Heart right ventricle (tissue), 16 donors: ENCODE measurements at regions of chr15 and their contacts with region 1.

Region 1: DNA sequence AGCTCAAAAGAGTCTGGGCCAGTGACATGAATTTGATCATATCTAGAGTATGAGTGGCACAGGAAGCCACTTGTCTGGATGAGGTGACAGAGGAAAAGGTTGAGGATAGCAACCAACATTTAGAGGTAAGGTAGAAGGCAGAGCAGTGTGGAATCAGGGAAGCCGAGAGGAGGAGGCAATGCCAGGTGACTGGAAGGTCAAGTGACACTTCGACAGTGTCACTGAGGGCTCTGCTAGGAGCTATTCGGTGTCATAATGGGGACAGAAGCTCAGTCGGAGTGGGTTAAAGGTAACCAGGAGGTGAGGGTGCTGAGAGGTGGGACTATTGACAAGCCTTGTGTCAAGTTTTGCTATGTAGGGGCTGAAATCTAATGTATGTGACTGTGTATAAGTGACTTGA is 56.7 kb downstream of the IGF1R start:
- DNase-seq: no peak
- ATAC-seq: peak in 4 of 8 donors; percentile 19 to 36 (median 26)
- H3K4me3 ChIP-seq: no peak overlapping the region
- H3K27ac ChIP-seq: peak overlapping the region in 4 of 10 donors; percentile 19 to 56 (median 34)
- H3K4me1 ChIP-seq: peaks cover 9 to 87% (median 53%) of the 10 kb centered on the region in 9 donors
- H3K27me3 ChIP-seq: no peaks in the 10 kb centered on the region
- CTCF ChIP-seq: no peak

Region 2: DNA sequence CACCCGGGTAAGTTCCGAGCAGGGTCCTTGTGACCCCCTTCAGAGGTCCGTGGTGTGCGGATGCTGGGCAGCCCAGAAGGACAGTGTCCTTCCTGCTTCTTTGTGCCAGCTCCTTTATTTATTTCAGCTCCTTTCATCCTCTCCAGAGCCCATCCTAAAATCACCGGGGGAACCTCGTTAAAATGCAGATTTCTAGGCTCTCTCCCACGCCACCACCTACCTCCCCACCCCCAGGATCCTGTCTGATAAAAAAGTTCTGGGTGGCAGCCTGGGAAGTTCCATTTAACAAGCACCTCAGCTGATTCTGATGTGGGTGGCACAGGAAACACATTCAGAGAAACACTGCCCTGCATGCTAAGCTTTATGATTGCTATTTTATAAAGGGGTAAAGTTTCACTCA is 69.2 kb before region 1 on chr15:
- intact Hi-C with region 1: no loop called
- DNase-seq: no peak
- ATAC-seq: no peak
- H3K4me3 ChIP-seq: no peak overlapping the region
- H3K27ac ChIP-seq: no peak overlapping the region
- H3K4me1 ChIP-seq: no peaks in the 10 kb centered on the region
- H3K27me3 ChIP-seq: peaks cover 0 to 66% (median 33%) of the 10 kb centered on the region in 7 donors
- CTCF ChIP-seq: no peak

Region 3: GRCh38 chr15:98658831-98659699 is 46.0 kb before region 1 on chr15:
- intact Hi-C with region 1: no loop called
- DNase-seq: peak in 1 of 2 donors; percentile 56
- ATAC-seq: peak; percentile 53 to 84 (median 65)
- H3K4me3 ChIP-seq: no peak overlapping the region
- H3K27ac ChIP-seq: no peak overlapping the region
- H3K4me1 ChIP-seq: peaks cover 8 to 89% (median 65%) of the 10 kb centered on the region in 9 donors
- H3K27me3 ChIP-seq: no peaks in the 10 kb centered on the region
- CTCF ChIP-seq: peak; percentile 62 to 91 (median 81)

Region 4: DNA sequence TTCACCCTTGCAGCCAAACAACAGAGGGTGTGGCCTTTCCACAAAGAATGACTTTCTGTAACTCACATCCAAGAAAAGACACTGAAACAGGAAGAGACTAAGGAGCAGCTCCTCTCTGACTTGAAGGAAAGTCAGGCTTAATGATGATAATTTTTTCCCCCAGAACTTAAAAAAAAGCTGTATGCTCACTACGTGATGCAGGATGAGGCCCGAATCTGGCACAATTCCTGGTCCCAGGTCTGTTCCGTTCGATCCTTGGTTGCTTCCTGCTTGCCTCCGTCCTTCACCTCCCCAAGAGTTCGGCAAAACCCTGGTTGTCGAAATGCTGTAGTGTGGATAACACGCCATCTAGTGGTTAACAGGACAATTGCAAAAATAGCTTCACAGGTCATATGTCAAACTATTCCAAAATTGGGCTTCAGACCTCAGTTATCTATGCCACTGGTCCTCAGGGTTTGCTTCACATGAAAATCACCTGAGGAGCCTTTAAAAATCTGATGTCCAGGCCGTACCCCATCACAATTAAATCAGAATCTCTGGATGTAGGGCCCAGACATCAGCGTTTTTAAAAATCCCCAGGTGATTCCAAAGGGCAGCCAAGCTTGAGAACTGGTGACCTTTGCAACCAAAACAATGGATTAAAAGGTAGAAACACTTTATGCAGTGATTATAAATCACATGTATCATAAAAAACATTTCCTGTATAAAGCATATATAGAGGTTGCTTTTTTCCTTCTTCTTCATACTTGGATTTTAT is 371.7 kb after region 1 on chr15:
- intact Hi-C with region 1: no loop called
- DNase-seq: peak in 1 of 2 donors; percentile 73
- ATAC-seq: peak; percentile 84 to 91 (median 87)
- H3K4me3 ChIP-seq: peak overlapping the region in 8 of 10 donors; percentile 11 to 50 (median 44)
- H3K27ac ChIP-seq: peak overlapping the region in 1 of 10 donors; percentile 66
- H3K4me1 ChIP-seq: peaks cover 0 to 9% (median 0%) of the 10 kb centered on the region in 9 donors
- H3K27me3 ChIP-seq: peaks cover 0 to 3% (median 0%) of the 10 kb centered on the region in 7 donors
- CTCF ChIP-seq: peak; percentile 78 to 92 (median 91)

Region 5: DNA sequence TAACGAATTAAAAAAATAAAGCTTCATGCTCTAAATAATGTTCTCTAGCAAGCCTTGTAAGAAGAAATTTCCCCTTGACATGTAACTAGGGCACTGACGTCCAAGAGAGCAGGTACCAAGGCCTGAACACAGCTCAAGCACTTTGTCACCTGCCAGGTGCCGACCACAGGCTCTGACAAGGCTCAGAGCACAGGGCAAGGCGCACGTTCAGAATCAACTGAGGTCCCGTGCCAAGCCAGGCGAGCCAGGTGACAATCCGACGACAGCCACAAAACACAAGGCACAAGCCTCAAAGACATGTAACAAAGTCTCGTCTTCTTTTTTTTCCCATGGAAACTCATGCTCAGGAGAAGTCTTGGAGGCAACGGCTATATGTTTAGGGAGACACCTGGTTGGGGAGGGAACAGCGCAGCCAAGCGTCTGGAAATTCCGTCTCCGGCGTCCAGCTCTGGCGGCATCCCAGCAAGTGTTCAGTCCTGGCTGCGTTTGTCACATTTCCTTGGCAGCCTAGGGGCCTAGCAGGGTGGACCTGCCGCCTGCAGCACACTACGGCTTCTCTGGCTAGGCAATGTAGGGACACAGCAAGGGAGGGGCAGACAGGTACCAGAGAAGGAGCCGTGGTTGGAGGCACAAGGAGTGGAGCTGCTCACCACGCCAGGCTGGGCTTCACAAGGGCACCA is 1560.1 kb after region 1 on chr15:
- intact Hi-C with region 1: loop called in 1 of 10 experiments (anchors 5 kb)
- DNase-seq: no peak
- ATAC-seq: peak in 2 of 8 donors; percentile 22 to 61
- H3K4me3 ChIP-seq: no peak overlapping the region
- H3K27ac ChIP-seq: no peak overlapping the region
- H3K4me1 ChIP-seq: no peaks in the 10 kb centered on the region
- H3K27me3 ChIP-seq: peaks cover 0 to 6% (median 0%) of the 10 kb centered on the region in 7 donors
- CTCF ChIP-seq: no peak